ENCODE measurements at regions of chr10 and their contacts with region 1.

Region 1: GRCh38 chr10:123507298-123507697 is 158.9 kb upstream of the GPR26 start:
- DNase-seq: no peak
- H3K4me3 ChIP-seq: no peak overlapping the region
- H3K27ac ChIP-seq: no peak overlapping the region
- H3K4me1 ChIP-seq: no peaks in the 10 kb centered on the region
- H3K27me3 ChIP-seq: no peaks in the 10 kb centered on the region
- CTCF ChIP-seq: no peak
- EP300 ChIP-seq: no peak
- POLR2A ChIP-seq: no peak

Region 2: GRCh38 chr10:123236122-123236521 is 271.2 kb before region 1 on chr10:
- intact Hi-C with region 1: loop called in 1 of 4 experiments (anchors 5 kb)
- DNase-seq: no peak
- H3K4me3 ChIP-seq: no peak overlapping the region
- H3K27ac ChIP-seq: no peak overlapping the region
- H3K4me1 ChIP-seq: no peaks in the 10 kb centered on the region
- H3K27me3 ChIP-seq: no peaks in the 10 kb centered on the region
- CTCF ChIP-seq: no peak
- EP300 ChIP-seq: no peak
- POLR2A ChIP-seq: no peak

Region 3: GRCh38 chr10:123607386-123607785 is 100.1 kb after region 1 on chr10:
- intact Hi-C with region 1: no loop called
- DNase-seq: no peak
- H3K4me3 ChIP-seq: no peak overlapping the region
- H3K27ac ChIP-seq: no peak overlapping the region
- H3K4me1 ChIP-seq: no peaks in the 10 kb centered on the region
- H3K27me3 ChIP-seq: no peaks in the 10 kb centered on the region
- CTCF ChIP-seq: no peak
- EP300 ChIP-seq: no peak
- POLR2A ChIP-seq: no peak

Measured in ovary (tissue), 10 donors.